ENCODE measurements at regions of chr3 and their contacts with region 1.

Region 1: DNA sequence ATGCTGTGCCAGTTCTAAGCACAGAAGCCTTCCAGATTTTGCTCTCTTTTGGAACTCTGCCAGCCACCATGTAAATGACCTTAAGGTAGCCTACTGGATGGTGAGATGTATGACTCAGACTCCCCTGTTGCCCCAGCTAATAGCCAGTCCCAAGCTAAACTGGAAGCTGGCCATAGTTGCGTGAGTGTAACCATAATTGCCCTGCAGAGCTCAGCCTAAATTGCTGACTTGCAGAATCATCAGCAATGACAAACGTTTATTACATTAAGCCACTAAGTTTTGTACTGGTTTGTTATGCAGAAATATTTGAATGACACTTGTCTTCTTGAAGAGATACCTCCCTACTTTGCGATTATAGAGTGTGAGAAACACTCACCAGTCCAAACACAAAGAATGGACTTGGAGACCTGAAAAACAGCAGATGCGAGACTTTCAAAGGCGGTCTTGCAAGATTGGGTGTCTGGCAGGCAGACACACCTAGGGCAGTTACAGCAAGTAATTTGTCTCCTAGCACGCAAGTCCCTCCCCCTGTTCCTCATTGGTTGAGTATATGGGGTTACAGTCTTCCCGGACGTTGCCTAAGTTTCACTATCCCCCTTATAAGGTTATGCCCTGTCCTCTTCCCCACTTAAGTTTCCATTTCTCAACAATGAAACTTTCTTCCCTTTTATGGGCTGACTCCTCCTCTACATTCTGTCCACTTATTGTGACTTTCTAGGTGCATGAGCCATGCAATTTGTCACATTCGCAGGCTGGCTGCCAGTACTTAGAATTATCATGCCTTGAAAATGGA is 83.6 kb upstream of the XCR1 start:
- DNase-seq: peak; percentile 86
- H3K4me3 ChIP-seq: no peak overlapping the region
- H3K27ac ChIP-seq: no peak overlapping the region
- H3K4me1 ChIP-seq: peaks cover 60% of the 10 kb centered on the region
- H3K27me3 ChIP-seq: no peaks in the 10 kb centered on the region
- CTCF ChIP-seq: no peak

Region 2: DNA sequence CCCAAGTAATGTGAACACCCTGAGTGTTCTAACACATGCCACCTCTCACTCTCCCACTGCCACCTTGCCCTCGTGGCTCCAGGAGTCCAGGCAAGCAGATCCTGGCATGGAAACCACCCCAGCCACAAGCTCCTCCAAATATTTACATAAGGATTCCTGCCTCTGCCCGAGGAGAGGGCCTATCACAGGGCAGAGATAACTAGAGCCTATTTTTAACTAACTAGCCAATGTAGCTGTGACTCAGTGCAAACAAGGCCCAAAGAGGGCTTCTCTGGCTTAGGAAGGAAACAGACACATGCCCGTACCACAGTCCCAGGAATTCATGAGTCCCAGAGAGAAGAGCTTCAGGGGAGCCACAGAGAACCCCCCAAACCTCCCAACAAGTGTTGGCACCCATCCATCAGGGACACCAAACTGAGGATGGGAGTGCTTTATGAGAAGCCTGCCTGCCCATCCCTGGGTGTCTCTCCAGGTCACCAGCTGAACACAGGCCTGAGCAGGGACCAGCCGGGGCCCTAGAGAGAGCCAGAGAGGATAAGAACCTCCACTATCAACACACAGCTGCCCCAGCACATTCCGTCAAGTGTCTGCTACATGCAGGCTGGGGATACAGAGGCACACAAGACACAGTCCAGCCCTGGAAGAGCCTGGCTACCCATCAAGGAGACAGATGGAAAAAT is 124.5 kb before region 1 on chr3:
- CTCF ChIA-PET with region 1: no interaction called
- dilution Hi-C with region 1: no loop called
- in situ Hi-C with region 1: no loop called
- intact Hi-C with region 1: no loop called
- DNase-seq: peak; percentile 60
- H3K4me3 ChIP-seq: no peak overlapping the region
- H3K27ac ChIP-seq: no peak overlapping the region
- H3K4me1 ChIP-seq: peaks cover 40% of the 10 kb centered on the region
- H3K27me3 ChIP-seq: no peaks in the 10 kb centered on the region
- CTCF ChIP-seq: no peak

Region 3: GRCh38 chr3:46154311-46154710 is 43.4 kb after region 1 on chr3:
- CTCF ChIA-PET with region 1: no interaction called
- dilution Hi-C with region 1: no loop called
- in situ Hi-C with region 1: no loop called
- intact Hi-C with region 1: no loop called
- DNase-seq: no peak
- H3K4me3 ChIP-seq: no peak overlapping the region
- H3K27ac ChIP-seq: no peak overlapping the region
- H3K4me1 ChIP-seq: no peaks in the 10 kb centered on the region
- H3K27me3 ChIP-seq: no peaks in the 10 kb centered on the region
- CTCF ChIP-seq: no peak

Region 4: GRCh38 chr3:46186471-46187340 is 75.8 kb after region 1 on chr3:
- CTCF ChIA-PET with region 1: no interaction called
- dilution Hi-C with region 1: no loop called
- in situ Hi-C with region 1: no loop called
- intact Hi-C with region 1: loop called (anchors 5 kb)
- DNase-seq: no peak
- H3K4me3 ChIP-seq: no peak overlapping the region
- H3K27ac ChIP-seq: no peak overlapping the region
- H3K4me1 ChIP-seq: peaks cover 18% of the 10 kb centered on the region
- H3K27me3 ChIP-seq: no peaks in the 10 kb centered on the region
- CTCF ChIP-seq: no peak